GM12878 (cell line): ENCODE measurements at regions of chr13 and their contacts with region 1.

Region 1: DNA sequence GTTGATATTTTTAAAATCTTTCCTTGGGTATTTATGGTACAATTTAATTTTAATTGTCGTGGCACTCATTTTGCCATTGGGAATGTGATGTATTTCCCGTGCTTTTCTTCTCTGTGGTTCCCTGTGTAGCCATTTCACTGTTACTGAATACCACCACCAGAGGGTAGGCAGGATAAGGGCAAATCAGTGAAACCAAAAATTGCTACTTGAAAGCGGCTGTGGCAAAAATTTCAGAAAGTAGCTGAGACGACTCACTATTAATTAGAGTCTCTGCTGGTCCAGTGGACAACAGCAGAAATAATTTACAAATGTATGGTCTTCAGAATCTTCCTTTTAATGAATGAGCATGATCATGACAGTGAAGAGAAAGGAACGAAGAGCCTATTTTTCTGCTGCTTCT is 34.4 kb upstream of the MIR17HG start:
- DNase-seq: no peak
- ATAC-seq: peak; percentile 86
- H3K4me3 ChIP-seq: 0 out of 2 replicates have a peak overlapping the region, but pooled peaks have one; percentile 26
- H3K27ac ChIP-seq: no peak overlapping the region; the same call in 1 of the 2 replicates
- H3K4me1 ChIP-seq: peaks cover 4% of the 10 kb centered on the region
- H3K27me3 ChIP-seq: no peaks in the 10 kb centered on the region
- CTCF ChIP-seq: peak; percentile 68 to 78 (median 72)
- EP300 ChIP-seq: no peak
- POLR2A ChIP-seq: no peak
- RAD21 ChIP-seq: peak; percentile 92

Region 2: DNA sequence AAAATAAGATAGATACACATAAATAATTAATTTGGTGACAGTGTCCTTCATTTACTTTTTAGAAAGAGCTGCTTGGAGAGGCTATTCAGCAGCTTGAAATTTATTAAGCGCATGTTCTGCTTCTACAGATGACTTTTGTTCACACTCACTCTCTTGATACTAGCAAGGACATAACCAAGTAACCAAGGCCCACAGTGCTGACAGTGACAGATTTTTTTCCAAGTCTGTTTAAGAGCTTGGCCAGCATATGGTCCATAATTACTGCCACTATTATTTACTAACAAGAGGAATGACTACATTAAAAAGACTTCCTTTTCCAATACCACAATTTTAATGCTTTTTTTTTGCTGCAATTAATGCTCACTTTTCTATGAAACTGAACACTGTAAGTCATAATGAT is 639.4 kb before region 1 on chr13:
- CTCF ChIA-PET with region 1: no interaction called
- POLR2A ChIA-PET with region 1: no interaction called
- RAD21 ChIA-PET with region 1: no interaction called
- SMC1A ChIA-PET with region 1: no interaction called
- in situ Hi-C with region 1: no loop called
- intact Hi-C with region 1: no loop called
- DNase-seq: no peak
- ATAC-seq: no peak
- H3K4me3 ChIP-seq: no peak overlapping the region
- H3K27ac ChIP-seq: no peak overlapping the region
- H3K4me1 ChIP-seq: no peaks in the 10 kb centered on the region
- H3K27me3 ChIP-seq: no peaks in the 10 kb centered on the region
- CTCF ChIP-seq: no peak
- EP300 ChIP-seq: no peak
- POLR2A ChIP-seq: no peak
- RAD21 ChIP-seq: no peak

Region 3: GRCh38 chr13:91302111-91302510 is 11.0 kb before region 1 on chr13:
- CTCF ChIA-PET with region 1: interaction called, 6 read pairs
- POLR2A ChIA-PET with region 1: interaction called, 5 read pairs
- RAD21 ChIA-PET with region 1: interaction called, 10 read pairs
- SMC1A ChIA-PET with region 1: interaction called, 6 read pairs
- in situ Hi-C with region 1: no loop called
- intact Hi-C with region 1: no loop called
- DNase-seq: no peak
- ATAC-seq: peak; percentile 89
- H3K4me3 ChIP-seq: no peak overlapping the region
- H3K27ac ChIP-seq: no peak overlapping the region
- H3K4me1 ChIP-seq: no peaks in the 10 kb centered on the region
- H3K27me3 ChIP-seq: no peaks in the 10 kb centered on the region
- CTCF ChIP-seq: no peak
- EP300 ChIP-seq: no peak
- POLR2A ChIP-seq: no peak
- RAD21 ChIP-seq: no peak

Region 4: GRCh38 chr13:91331047-91331915 is 18.2 kb after region 1 on chr13:
- CTCF ChIA-PET with region 1: interaction called, 102 read pairs
- POLR2A ChIA-PET with region 1: interaction called, 3 read pairs
- RAD21 ChIA-PET with region 1: interaction called, 72 read pairs
- SMC1A ChIA-PET with region 1: interaction called, 46 read pairs
- in situ Hi-C with region 1: no loop called
- intact Hi-C with region 1: no loop called
- DNase-seq: no peak
- ATAC-seq: peak; percentile 91
- H3K4me3 ChIP-seq: peak overlapping the region; percentile 68; the same call in 1 of the 2 replicates
- H3K27ac ChIP-seq: peak overlapping the region; percentile 71
- H3K4me1 ChIP-seq: peaks cover 15% of the 10 kb centered on the region
- H3K27me3 ChIP-seq: no peaks in the 10 kb centered on the region
- CTCF ChIP-seq: no peak
- EP300 ChIP-seq: no peak
- POLR2A ChIP-seq: no peak
- RAD21 ChIP-seq: no peak

Region 5: DNA sequence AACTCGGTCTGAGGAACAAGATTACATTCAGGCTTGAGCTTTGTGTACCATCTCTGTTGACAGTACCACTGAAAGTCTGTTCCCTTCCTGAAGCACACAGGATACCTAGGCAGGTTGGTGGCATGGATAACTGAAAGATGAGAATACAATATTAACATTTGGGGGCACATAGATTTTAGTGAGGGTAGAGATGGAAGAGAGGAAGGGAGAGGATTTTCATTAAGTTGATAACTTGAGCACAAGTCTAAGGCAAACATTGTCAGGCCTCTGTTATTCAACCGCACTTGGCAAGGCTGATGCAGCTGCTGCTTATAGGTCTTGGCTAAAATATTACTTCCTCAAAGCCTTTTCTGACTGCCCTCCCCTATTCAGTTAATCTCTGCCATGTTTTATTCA is 45.3 kb after region 1 on chr13:
- CTCF ChIA-PET with region 1: interaction called, 43 read pairs
- POLR2A ChIA-PET with region 1: interaction called, 8 read pairs
- RAD21 ChIA-PET with region 1: interaction called, 8 read pairs
- SMC1A ChIA-PET with region 1: interaction called, 12 read pairs
- in situ Hi-C with region 1: no loop called
- intact Hi-C with region 1: no loop called
- DNase-seq: no peak
- ATAC-seq: peak; percentile 25
- H3K4me3 ChIP-seq: no peak overlapping the region
- H3K27ac ChIP-seq: no peak overlapping the region
- H3K4me1 ChIP-seq: no peaks in the 10 kb centered on the region
- H3K27me3 ChIP-seq: no peaks in the 10 kb centered on the region
- CTCF ChIP-seq: no peak
- EP300 ChIP-seq: no peak
- POLR2A ChIP-seq: peak; percentile 65; the same call in 1 of the 2 replicates
- RAD21 ChIP-seq: no peak

Region 6: DNA sequence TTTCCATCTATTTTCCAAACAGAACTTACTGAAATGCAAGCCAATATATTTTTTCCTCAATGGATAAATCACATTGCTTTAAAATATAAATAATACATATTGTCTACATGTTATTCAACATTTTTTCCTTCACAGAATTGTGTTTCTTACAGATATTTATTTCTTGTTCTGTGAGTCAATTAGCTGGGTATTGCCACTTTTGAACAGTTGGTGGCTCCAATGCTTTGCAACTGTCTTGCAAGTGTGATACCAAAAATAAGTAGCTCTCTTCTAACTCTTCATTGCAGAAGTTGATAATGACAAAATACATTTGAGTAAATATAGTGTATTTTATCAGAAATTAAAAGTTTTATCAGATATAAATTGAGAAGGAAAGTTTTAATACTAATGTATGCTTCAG is 68.3 kb after region 1 on chr13:
- CTCF ChIA-PET with region 1: interaction called, 53 read pairs
- POLR2A ChIA-PET with region 1: no interaction called
- RAD21 ChIA-PET with region 1: interaction called, 7 read pairs
- SMC1A ChIA-PET with region 1: interaction called, 50 read pairs
- in situ Hi-C with region 1: no loop called
- intact Hi-C with region 1: no loop called
- DNase-seq: no peak
- ATAC-seq: peak; percentile 42; the same call in 1 of the 3 replicates
- H3K4me3 ChIP-seq: no peak overlapping the region
- H3K27ac ChIP-seq: no peak overlapping the region
- H3K4me1 ChIP-seq: no peaks in the 10 kb centered on the region
- H3K27me3 ChIP-seq: no peaks in the 10 kb centered on the region
- CTCF ChIP-seq: peak; percentile 34 to 53 (median 52); a peak in 5 of 6 replicates
- EP300 ChIP-seq: no peak
- POLR2A ChIP-seq: no peak
- RAD21 ChIP-seq: peak; percentile 62

Region 7: DNA sequence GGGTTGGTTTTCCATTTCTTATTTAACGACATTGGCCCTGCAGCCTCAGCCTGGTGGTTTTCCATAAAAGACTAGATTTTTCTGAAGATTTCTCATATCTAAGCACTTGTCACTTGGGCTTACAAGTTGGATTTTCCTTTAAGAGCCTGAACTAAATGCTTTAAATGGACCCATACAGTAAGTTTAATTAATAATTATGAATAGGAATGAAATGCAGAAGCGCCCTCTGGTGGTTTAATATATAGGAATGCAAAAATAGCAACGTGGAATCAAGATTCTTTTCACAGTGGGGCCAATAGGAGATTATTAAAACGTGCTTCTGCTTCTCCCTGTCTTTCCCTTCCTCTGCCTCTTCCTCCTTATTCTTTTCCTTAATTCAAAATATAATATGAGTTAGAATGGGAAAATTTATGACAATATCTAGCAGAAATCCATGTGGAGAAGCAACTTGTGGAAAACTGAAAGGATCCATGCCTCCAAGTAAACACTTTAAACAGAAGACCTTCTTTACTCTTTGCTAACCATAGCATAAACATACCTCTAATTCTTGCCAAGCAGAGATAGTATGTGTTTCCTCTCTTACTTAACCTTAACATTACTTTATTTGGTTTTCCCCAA is 409.3 kb after region 1 on chr13:
- CTCF ChIA-PET with region 1: interaction called, 11 read pairs
- POLR2A ChIA-PET with region 1: no interaction called
- RAD21 ChIA-PET with region 1: no interaction called
- SMC1A ChIA-PET with region 1: interaction called, 3 read pairs
- in situ Hi-C with region 1: no loop called
- intact Hi-C with region 1: no loop called
- DNase-seq: no peak
- ATAC-seq: no peak
- H3K4me3 ChIP-seq: no peak overlapping the region
- H3K27ac ChIP-seq: no peak overlapping the region
- H3K4me1 ChIP-seq: no peaks in the 10 kb centered on the region
- H3K27me3 ChIP-seq: peaks cover 0 to 3% of the 10 kb centered on the region in 2 experiments; a peak in 1 of 4 replicates
- CTCF ChIP-seq: peak; percentile 33 to 50 (median 42); a peak in 4 of 6 replicates
- EP300 ChIP-seq: no peak
- POLR2A ChIP-seq: no peak
- RAD21 ChIP-seq: peak; percentile 45